ENCODE measurements at regions of chr10 and their contacts with region 1.

Region 1: GRCh38 chr10:21265621-21266020 is 259.9 kb downstream of the SKIDA1 start:
- DNase-seq: peak; percentile 54
- H3K4me3 ChIP-seq: no peak overlapping the region
- H3K27ac ChIP-seq: no peak overlapping the region
- H3K4me1 ChIP-seq: peaks cover 2% of the 10 kb centered on the region; the same call in 1 of the 2 replicates
- H3K27me3 ChIP-seq: no peaks in the 10 kb centered on the region; the same call in 1 of the 2 replicates

Region 2: GRCh38 chr10:20898866-20899535 is 366.6 kb before region 1 on chr10:
- in situ Hi-C with region 1: no loop called
- DNase-seq: no peak
- H3K4me3 ChIP-seq: no peak overlapping the region
- H3K27ac ChIP-seq: no peak overlapping the region
- H3K4me1 ChIP-seq: no peaks in the 10 kb centered on the region
- H3K27me3 ChIP-seq: no peaks in the 10 kb centered on the region

Region 3: DNA sequence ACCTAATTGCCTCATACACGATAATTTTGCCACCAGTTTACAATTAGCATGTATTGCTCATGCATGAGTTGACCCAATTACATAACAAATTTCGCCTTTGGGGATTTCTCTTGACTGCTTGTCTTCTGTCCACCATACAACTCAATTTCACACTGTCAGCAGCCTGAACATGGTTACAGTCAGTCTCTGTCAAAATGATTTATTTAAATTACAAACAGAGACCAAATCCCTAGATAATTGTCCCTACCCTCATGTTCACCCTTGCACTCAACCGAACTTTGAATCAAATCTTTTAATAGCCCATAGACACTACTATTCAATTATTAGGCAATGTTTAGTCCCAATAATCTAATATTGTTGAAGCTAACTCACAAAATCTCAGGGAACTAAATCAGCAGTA is 308.8 kb before region 1 on chr10:
- in situ Hi-C with region 1: no loop called
- DNase-seq: no peak
- H3K4me3 ChIP-seq: no peak overlapping the region
- H3K27ac ChIP-seq: no peak overlapping the region
- H3K4me1 ChIP-seq: no peaks in the 10 kb centered on the region
- H3K27me3 ChIP-seq: no peaks in the 10 kb centered on the region

Region 4: GRCh38 chr10:21078410-21079329 is 187.0 kb before region 1 on chr10:
- in situ Hi-C with region 1: loop called (anchors 10 kb)
- DNase-seq: peak; percentile 78
- H3K4me3 ChIP-seq: no peak overlapping the region
- H3K27ac ChIP-seq: no peak overlapping the region
- H3K4me1 ChIP-seq: 0 out of 2 replicates have a peak, but pooled peaks cover 4% of the 10 kb centered on the region
- H3K27me3 ChIP-seq: no peaks in the 10 kb centered on the region; the same call in 1 of the 2 replicates

Region 5: GRCh38 chr10:21385996-21386610 is 120.5 kb after region 1 on chr10:
- in situ Hi-C with region 1: no loop called
- DNase-seq: no peak
- H3K4me3 ChIP-seq: no peak overlapping the region
- H3K27ac ChIP-seq: no peak overlapping the region
- H3K4me1 ChIP-seq: no peaks in the 10 kb centered on the region
- H3K27me3 ChIP-seq: no peaks in the 10 kb centered on the region

Region 6: GRCh38 chr10:21536874-21537273 is 271.3 kb after region 1 on chr10:
- in situ Hi-C with region 1: no loop called
- DNase-seq: no peak
- H3K4me3 ChIP-seq: no peak overlapping the region
- H3K27ac ChIP-seq: no peak overlapping the region
- H3K4me1 ChIP-seq: peaks cover 10% of the 10 kb centered on the region
- H3K27me3 ChIP-seq: no peaks in the 10 kb centered on the region

Measured in GM23248 (cell line).